Activated CD8-positive, alpha-beta memory T cell treated with anti-CD3 and anti-CD28 coated beads, Interleukin-2, amount 10 ng/mL, durations not matched to agents 7 days and 5 days (primary cell): ENCODE measurements at regions of chr7 and their contacts with region 1.

Region 1: GRCh38 chr7:100407285-100408180 is 21.0 kb downstream of the ZCWPW1 start:
- DNase-seq: peak; percentile 59
- ATAC-seq: peak; percentile 91
- H3K4me3 Mint-ChIP-seq: no peak overlapping the region
- H3K27ac Mint-ChIP-seq: no peak overlapping the region
- H3K4me1 Mint-ChIP-seq: peaks cover 9% of the 10 kb centered on the region
- H3K27me3 Mint-ChIP-seq: peaks cover 18% of the 10 kb centered on the region

Region 2: GRCh38 chr7:99928994-99929729 is 478.4 kb before region 1 on chr7 and contains the start of gene GJC3:
- CTCF ChIA-PET with region 1: no interaction called
- DNase-seq: peak; percentile 65
- ATAC-seq: peak; percentile 96
- H3K4me3 Mint-ChIP-seq: peak within 1 kb of the TSS; percentile 53
- H3K27ac Mint-ChIP-seq: no peak within 1 kb of the TSS
- H3K4me1 Mint-ChIP-seq: peaks cover 17% of the 10 kb centered on the region
- H3K27me3 Mint-ChIP-seq: peaks cover 40% of the 10 kb centered on the region
- total RNA-seq, gene GJC3: not detected

Region 3: GRCh38 chr7:100346921-100347320 is 60.6 kb before region 1 on chr7:
- CTCF ChIA-PET with region 1: interaction called, 22 read pairs
- DNase-seq: no peak
- ATAC-seq: no peak
- H3K4me3 Mint-ChIP-seq: no peak overlapping the region
- H3K27ac Mint-ChIP-seq: peak overlapping the region; percentile 50
- H3K4me1 Mint-ChIP-seq: peaks cover 54% of the 10 kb centered on the region
- H3K27me3 Mint-ChIP-seq: no peaks in the 10 kb centered on the region

Region 4: GRCh38 chr7:100373261-100373831 is 34.2 kb before region 1 on chr7 and contains the start of gene PILRA:
- CTCF ChIA-PET with region 1: interaction called, 17 read pairs
- DNase-seq: no peak
- ATAC-seq: no peak
- H3K4me3 Mint-ChIP-seq: no peak within 1 kb of the TSS
- H3K27ac Mint-ChIP-seq: peak within 1 kb of the TSS; percentile 88
- H3K4me1 Mint-ChIP-seq: peaks cover 38% of the 10 kb centered on the region
- H3K27me3 Mint-ChIP-seq: no peaks in the 10 kb centered on the region
- total RNA-seq, gene PILRA: 1.3 to 3.4 TPM

Region 5: GRCh38 chr7:100384628-100385294 is 22.8 kb before region 1 on chr7:
- CTCF ChIA-PET with region 1: interaction called, 24 read pairs
- DNase-seq: no peak
- ATAC-seq: no peak
- H3K4me3 Mint-ChIP-seq: no peak overlapping the region
- H3K27ac Mint-ChIP-seq: no peak overlapping the region
- H3K4me1 Mint-ChIP-seq: peaks cover 11% of the 10 kb centered on the region
- H3K27me3 Mint-ChIP-seq: peaks cover 26% of the 10 kb centered on the region

Region 6: DNA sequence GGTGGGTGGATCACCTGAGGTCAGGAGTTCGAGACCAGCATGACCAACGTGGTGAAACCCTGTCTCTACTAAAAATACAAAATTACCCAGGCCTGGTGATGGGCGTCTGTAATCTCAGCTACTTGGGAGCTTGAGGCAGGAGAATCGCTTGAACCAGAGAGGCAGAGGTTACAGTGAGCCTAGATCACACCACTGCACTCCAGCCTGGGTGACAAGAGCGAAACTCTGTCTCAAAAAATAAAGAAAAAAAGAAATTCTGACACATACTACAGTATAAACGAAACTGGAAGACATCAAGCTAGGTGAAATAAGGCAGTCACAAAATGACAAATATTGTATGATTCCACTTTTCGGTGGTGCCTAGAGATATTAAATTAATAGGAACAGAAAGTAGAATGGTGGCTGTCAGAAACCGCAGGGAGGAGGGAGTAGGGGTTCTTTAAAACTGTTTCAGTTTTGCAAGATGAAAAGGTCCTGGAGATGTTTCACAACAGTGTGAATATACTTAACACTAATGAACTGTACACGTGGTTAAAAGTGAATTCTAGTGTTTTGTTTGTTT is 11.0 kb before region 1 on chr7:
- CTCF ChIA-PET with region 1: interaction called, 24 read pairs
- DNase-seq: peak; percentile 86
- ATAC-seq: peak; percentile 88
- H3K4me3 Mint-ChIP-seq: peak overlapping the region; percentile 50
- H3K27ac Mint-ChIP-seq: peak overlapping the region; percentile 95
- H3K4me1 Mint-ChIP-seq: peaks cover 21% of the 10 kb centered on the region
- H3K27me3 Mint-ChIP-seq: peaks cover 34% of the 10 kb centered on the region

Region 7: DNA sequence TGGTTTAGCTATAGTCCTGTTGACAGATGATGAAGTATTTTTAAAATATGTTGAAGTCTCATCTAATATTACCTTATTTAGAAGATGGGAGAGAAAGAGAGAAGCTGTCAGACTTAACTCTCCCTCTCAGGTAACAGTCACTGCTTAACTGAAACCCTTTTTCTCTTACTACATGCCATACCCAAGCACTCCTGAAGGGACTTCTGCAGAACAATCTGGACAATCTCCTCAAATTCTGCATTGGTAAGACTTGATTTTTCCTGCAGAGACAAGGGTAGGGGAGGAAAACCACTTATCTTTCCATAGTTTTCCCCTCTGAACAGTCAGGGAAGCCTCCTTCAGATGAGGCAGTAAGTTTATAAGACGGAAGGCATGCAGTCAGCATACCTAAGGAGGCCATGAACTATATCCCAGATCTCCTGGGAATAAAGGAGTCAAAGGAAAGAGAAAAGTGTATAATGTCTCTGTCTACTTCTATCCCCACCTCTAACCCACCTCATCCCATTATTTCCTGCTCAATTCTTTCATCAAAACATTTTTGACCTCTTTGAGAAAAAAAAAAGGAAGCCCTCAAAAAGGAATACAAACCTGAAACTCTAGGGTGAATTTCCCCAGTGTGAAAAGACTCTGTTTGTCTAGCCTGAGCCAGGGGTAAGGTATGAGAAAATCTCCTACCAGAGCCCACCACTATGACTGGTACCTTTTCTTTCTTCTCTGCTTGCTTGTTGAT is 11.6 kb after region 1 on chr7:
- CTCF ChIA-PET with region 1: interaction called, 18 read pairs
- DNase-seq: no peak
- ATAC-seq: no peak
- H3K4me3 Mint-ChIP-seq: no peak overlapping the region
- H3K27ac Mint-ChIP-seq: no peak overlapping the region
- H3K4me1 Mint-ChIP-seq: peaks cover 2% of the 10 kb centered on the region
- H3K27me3 Mint-ChIP-seq: no peaks in the 10 kb centered on the region

Region 8: GRCh38 chr7:100428199-100428966 is 20.9 kb after region 1 on chr7 and contains the start of gene ZCWPW1:
- CTCF ChIA-PET with region 1: interaction called, 22 read pairs
- DNase-seq: peak; percentile 98
- ATAC-seq: peak; percentile 59
- H3K4me3 Mint-ChIP-seq: peak within 1 kb of the TSS; percentile 97
- H3K27ac Mint-ChIP-seq: peak within 1 kb of the TSS; percentile 100
- H3K4me1 Mint-ChIP-seq: peaks cover 36% of the 10 kb centered on the region
- H3K27me3 Mint-ChIP-seq: peaks cover 9% of the 10 kb centered on the region
- total RNA-seq, gene ZCWPW1: 2.6 to 3.3 TPM

Region 9: GRCh38 chr7:100655908-100656674 is 248.6 kb after region 1 on chr7 and contains the start of gene ACTL6B:
- CTCF ChIA-PET with region 1: no interaction called
- DNase-seq: peak; percentile 67
- ATAC-seq: peak; percentile 88
- H3K4me3 Mint-ChIP-seq: no peak within 1 kb of the TSS
- H3K27ac Mint-ChIP-seq: no peak within 1 kb of the TSS
- H3K4me1 Mint-ChIP-seq: no peaks in the 10 kb centered on the region
- H3K27me3 Mint-ChIP-seq: peaks cover 39% of the 10 kb centered on the region
- total RNA-seq, gene ACTL6B: not detected